ENCODE measurements at regions of chr2 and their contacts with region 1.

Region 1: DNA sequence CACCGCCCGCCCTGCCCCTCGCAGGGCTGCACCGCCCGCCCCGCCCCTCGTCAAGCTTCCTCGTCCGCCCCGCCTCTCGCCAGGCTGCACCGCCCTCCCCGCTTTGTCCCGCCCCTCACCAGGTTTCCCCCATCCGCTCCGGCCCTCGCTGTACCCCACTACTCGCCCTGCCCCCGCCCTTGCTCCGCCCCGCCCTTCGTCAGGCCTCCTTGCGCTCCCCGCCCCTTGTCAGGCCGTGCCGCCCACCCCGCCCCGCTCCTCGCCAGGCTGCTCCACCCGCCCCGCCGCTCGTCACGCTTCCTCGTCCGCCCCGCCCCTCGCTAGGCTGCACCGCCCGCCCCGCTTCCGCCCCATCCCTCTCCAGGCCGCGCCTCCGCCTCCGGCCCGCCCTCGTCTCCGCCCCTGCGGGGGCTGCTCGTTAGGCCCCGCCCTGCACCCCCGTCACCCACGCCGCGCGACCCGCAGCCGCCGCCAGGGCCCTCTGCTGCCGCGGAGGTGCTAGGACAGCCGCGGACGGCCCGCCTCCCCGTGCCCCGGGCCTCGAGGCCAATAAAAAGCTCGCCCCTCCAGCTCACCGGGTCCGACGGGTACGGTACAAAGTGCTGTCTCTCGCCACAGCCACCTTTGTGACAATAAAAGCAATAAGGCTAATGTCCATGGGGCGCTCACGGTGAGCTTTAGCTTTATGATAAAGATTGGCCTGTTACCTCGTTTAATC is 574 bp upstream of the DNPEP start:
- DNase-seq: peak; percentile 95
- H3K4me3 Mint-ChIP-seq: peak overlapping the region; percentile 97
- H3K27ac Mint-ChIP-seq: peak overlapping the region; percentile 67
- H3K4me1 Mint-ChIP-seq: peaks cover 6% of the 10 kb centered on the region
- H3K27me3 Mint-ChIP-seq: peaks cover 23% of the 10 kb centered on the region

Region 2: DNA sequence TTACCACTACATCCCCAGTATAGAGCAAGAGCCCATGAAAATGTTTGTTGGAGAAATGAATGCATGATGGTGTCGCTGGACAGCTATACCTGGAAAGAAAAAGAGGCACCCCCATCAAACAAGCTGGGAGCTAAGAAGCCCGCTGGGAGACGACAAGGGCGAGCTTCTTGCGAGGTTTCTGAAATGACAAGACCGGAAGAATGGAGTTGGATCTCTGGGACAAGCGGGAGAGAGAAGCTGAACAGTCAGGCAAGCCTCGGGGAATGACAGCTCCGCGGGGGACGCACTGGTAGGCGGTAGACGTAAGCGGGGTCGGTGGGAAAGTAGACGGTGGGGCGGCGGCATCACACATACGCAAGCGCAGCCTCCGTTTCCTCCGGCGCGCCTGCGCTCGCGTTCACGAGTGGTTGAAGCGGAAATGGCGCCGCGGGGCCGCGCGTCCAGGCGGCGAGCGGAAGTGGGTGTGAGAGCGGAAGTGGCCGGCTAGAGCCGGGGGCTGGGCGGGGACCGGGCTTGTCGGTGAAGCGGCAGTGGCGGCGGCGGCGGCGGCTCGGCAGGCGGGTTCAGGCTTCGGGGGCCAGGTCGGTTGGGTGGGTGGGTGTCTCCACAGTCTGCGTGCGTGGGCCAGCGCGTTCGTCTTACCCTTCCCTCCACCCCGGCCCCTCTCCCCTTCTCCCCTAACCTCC is 1171.5 kb before region 1 on chr2 and contains the start of gene ARPC2:
- intact Hi-C with region 1: loop called (anchors 5 kb)
- DNase-seq: peak; percentile 96
- H3K4me3 Mint-ChIP-seq: peak within 1 kb of the TSS; percentile 91
- H3K27ac Mint-ChIP-seq: peak within 1 kb of the TSS; percentile 95
- H3K4me1 Mint-ChIP-seq: peaks cover 36% of the 10 kb centered on the region
- H3K27me3 Mint-ChIP-seq: no peaks in the 10 kb centered on the region
- total RNA-seq, gene ARPC2: 507 and 509 TPM in 2 replicates

Region 3: DNA sequence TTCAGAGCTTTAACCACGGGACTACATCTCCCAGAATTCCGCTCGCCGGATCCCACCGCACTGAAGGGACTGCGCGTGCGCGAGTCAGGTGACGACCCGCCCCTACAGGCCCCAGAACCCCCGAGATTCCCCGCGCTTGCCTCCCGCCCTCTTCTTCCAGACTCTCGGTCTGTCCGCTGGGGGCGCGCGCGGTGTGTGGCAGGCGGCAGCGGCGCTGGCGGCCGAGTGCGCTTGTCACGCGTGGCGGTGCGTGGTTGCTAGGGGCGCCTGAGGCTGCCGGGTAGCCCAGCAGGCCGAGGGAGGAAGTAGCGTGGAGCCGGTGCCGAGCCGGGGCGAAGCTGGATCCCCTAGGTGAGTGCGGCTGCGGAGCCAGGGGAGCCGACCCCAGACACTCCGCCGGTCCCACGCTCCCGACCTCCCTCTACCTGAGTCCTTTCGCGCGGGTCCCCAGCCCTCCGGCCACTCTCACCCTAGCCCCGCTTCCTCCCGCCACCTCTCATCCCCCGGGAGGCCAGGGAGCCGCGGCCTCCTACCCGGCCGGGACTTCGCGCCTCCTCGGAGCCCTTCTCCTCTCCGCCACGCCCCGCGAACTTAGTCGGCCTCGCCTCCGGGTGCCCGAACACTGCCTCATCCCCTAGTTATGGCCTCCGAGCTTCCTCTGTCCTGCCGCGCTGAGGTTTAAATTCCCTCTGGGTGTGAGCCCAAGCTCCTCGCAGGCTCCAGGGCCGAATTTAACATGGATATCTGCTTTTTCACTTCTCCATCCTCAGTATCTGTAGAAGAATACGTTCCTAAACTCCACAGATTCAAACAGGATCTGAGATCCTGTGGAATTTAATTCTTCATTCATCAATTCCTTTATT is 677.4 kb before region 1 on chr2 and contains the start of gene TTLL4:
- intact Hi-C with region 1: loop called (anchors 1 kb)
- DNase-seq: peak; percentile 99
- H3K4me3 Mint-ChIP-seq: peak within 1 kb of the TSS; percentile 94
- H3K27ac Mint-ChIP-seq: peak within 1 kb of the TSS; percentile 87
- H3K4me1 Mint-ChIP-seq: peaks cover 27% of the 10 kb centered on the region
- H3K27me3 Mint-ChIP-seq: peaks cover 12% of the 10 kb centered on the region
- total RNA-seq, gene TTLL4: 70.6 and 78.3 TPM in 2 replicates

Region 4: DNA sequence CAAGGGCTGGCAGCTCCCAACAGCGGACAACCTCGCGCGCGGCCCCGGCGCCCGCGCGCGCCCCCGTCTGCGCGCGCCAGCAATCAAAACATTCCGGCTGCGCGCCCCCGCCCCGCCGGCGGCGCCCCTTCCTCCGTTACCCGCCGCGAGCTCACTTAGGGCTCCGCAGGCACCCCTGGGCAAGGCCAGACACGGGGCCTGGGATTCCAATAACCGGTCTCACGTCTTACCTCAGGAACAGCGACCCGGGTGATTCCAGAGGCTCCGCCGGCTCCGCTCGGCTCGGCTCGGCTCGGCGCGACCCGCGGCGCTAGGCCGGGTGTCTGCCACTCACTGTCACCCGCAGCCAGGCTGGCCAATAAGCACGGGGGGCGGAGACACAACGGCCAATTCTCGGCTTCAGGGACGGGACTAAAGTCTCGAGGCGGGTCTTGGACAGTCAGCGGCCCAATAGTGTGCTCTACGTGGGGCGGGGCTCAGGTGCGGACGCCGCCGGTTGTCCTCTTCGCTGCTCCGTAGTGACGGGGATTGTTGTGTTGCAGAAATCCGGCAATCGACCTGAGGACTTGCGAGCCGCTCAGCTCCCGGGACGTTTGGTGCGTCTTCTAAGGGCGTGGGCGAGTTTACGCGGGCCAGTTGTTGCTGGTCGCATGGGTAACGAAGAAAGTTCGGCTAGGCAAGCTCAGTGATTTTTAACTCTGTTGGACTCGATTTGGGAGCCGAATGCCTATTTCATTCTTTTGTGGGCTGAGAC is 158.8 kb before region 1 on chr2 and contains the starts of genes ANKZF1 and ATG9A:
- intact Hi-C with region 1: loop called (anchors 1 kb)
- DNase-seq: peak; percentile 98
- H3K4me3 Mint-ChIP-seq: peak within 1 kb of the TSS; percentile 97
- H3K27ac Mint-ChIP-seq: peak within 1 kb of the TSS; percentile 99
- H3K4me1 Mint-ChIP-seq: peaks cover 47% of the 10 kb centered on the region
- H3K27me3 Mint-ChIP-seq: no peaks in the 10 kb centered on the region
- total RNA-seq, gene ANKZF1: 112 and 117 TPM in 2 replicates
- total RNA-seq, gene ATG9A: 55.3 and 57.0 TPM in 2 replicates

Region 5: GRCh38 chr2:219294356-219295351 is 93.6 kb before region 1 on chr2:
- intact Hi-C with region 1: loop called (anchors 2 kb)
- DNase-seq: peak; percentile 87
- H3K4me3 Mint-ChIP-seq: peak overlapping the region; percentile 80
- H3K27ac Mint-ChIP-seq: peak overlapping the region; percentile 87
- H3K4me1 Mint-ChIP-seq: peaks cover 14% of the 10 kb centered on the region
- H3K27me3 Mint-ChIP-seq: peaks cover 17% of the 10 kb centered on the region

Region 6: GRCh38 chr2:219597552-219598307 is 209.4 kb after region 1 on chr2 and contains the start of gene STK11IP:
- intact Hi-C with region 1: loop called (anchors 1 kb)
- DNase-seq: peak; percentile 89
- H3K4me3 Mint-ChIP-seq: peak within 1 kb of the TSS; percentile 90
- H3K27ac Mint-ChIP-seq: peak within 1 kb of the TSS; percentile 96
- H3K4me1 Mint-ChIP-seq: peaks cover 26% of the 10 kb centered on the region
- H3K27me3 Mint-ChIP-seq: peaks cover 2% of the 10 kb centered on the region
- total RNA-seq, gene STK11IP: 38.0 and 38.9 TPM in 2 replicates